K562 (cell line): ENCODE measurements at regions of chr17 and their contacts with region 1.

Region 1: DNA sequence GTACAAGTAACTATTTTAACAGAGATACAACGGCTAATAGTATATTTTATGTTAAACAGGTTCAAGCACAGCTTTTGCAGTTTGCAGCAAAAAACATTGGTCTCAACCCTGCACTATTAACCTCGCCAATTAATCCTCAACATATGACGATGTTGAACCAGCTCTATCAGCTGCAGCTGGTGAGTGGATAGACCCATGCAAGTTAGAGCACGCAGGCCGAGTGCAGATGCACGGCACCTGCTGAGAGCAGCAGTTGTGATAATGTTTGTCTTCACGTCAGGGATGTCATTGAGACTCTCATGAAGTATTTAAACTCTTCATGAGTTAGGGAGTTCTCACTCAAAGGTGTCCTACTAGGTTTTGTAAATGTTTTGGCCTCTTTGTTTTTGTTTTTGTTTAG is 45.6 kb downstream of the TMC6 start:
- DNase-seq: peak in 1 of 4 experiments; percentile 29
- ATAC-seq: no peak
- H3K4me3 ChIP-seq: no peak overlapping the region
- H3K27ac ChIP-seq: 0 out of 3 replicates have a peak overlapping the region, but pooled peaks have one; percentile 20
- H3K4me1 ChIP-seq: peaks cover 21 to 23% of the 10 kb centered on the region in 2 experiments; a peak in 4 of 5 replicates
- H3K27me3 ChIP-seq: no peaks in the 10 kb centered on the region
- CTCF ChIP-seq: no peak
- EP300 ChIP-seq: no peak
- POLR2A ChIP-seq: no peak
- RAD21 ChIP-seq: no peak

Region 2: DNA sequence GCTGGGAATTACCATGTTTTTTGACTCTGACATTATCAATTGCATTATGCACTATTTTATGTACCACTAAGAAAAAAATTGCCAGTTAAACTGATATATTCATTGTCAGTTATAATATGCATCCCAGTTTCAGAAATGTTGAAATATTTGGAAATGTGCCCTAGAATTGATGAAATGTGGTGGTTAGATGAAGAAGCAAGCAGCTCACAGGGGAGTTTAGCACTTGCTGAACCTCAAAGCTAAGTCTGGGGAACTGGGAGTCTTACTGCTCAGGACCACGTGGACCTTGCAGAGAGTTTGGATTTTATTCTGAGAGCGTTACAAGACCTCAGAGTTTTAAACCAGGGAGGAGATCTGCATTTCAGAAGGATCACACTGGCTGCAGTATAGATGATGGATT is 56.6 kb before region 1 on chr17:
- CTCF ChIA-PET with region 1: no interaction called
- POLR2A ChIA-PET with region 1: no interaction called
- in situ Hi-C with region 1: no loop called
- intact Hi-C with region 1: loop called (anchors 2 kb)
- DNase-seq: peak in 2 of 4 experiments; percentile 7 to 25
- ATAC-seq: no peak
- H3K4me3 ChIP-seq: no peak overlapping the region
- H3K27ac ChIP-seq: no peak overlapping the region; the same call in 1 of the 3 replicates
- H3K4me1 ChIP-seq: peaks cover 21 to 47% of the 10 kb centered on the region in 2 experiments; a peak in 4 of 5 replicates
- H3K27me3 ChIP-seq: no peaks in the 10 kb centered on the region
- CTCF ChIP-seq: no peak
- EP300 ChIP-seq: no peak
- POLR2A ChIP-seq: no peak
- RAD21 ChIP-seq: no peak

Region 3: GRCh38 chr17:78040440-78041385 is 42.3 kb before region 1 on chr17:
- CTCF ChIA-PET with region 1: no interaction called
- POLR2A ChIA-PET with region 1: no interaction called
- in situ Hi-C with region 1: no loop called
- intact Hi-C with region 1: no loop called
- DNase-seq: no peak
- ATAC-seq: no peak
- H3K4me3 ChIP-seq: no peak overlapping the region
- H3K27ac ChIP-seq: no peak overlapping the region
- H3K4me1 ChIP-seq: peaks cover 6% of the 10 kb centered on the region in 2 experiments; a peak in 4 of 5 replicates
- H3K27me3 ChIP-seq: no peaks in the 10 kb centered on the region
- CTCF ChIP-seq: no peak
- EP300 ChIP-seq: no peak
- POLR2A ChIP-seq: no peak
- RAD21 ChIP-seq: no peak